Left lung (tissue), 14 donors: ENCODE measurements at regions of chr4 and their contacts with region 1.

Region 1: GRCh38 chr4:74618659-74619058 is 173.7 kb downstream of the AREG start:
- DNase-seq: no peak
- ATAC-seq: peak; percentile 28
- H3K4me3 ChIP-seq: no peak overlapping the region
- H3K27ac ChIP-seq: no peak overlapping the region
- H3K4me1 ChIP-seq: peaks cover 10 to 11% of the 10 kb centered on the region in 2 donors
- H3K27me3 ChIP-seq: no peaks in the 10 kb centered on the region
- CTCF ChIP-seq: no peak

Region 2: DNA sequence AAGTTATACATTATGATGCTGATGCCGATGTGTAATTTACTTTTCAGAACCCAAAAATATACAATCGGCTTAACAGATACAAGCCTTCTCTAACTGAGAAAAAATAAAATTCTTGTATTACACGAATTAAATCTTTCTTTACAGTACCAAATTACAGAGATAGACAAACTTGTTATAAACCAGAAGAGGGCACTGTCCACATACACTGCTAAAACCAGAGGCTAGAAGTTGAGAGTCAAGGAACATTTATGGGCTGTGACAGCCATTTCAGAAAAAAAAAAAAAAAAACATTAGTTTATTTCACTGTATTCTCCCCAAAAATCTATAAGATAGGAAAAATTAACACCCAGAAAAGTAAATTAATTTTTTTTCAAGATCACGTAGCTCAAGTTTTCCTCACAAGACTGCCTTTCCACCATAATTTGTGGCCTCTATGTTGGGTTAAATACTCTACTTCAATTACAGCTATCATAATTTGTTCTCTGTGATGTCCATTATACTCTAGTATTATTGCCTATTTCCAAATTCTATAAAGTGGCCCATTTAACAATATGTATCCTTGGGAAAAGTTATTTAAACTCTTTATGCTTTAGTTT is 241.7 kb before region 1 on chr4:
- intact Hi-C with region 1: loop called in 1 of 2 experiments (anchors 5 kb)
- DNase-seq: peak in 1 of 4 donors; percentile 57
- ATAC-seq: peak; percentile 89
- H3K4me3 ChIP-seq: no peak overlapping the region
- H3K27ac ChIP-seq: no peak overlapping the region
- H3K4me1 ChIP-seq: no peaks in the 10 kb centered on the region
- H3K27me3 ChIP-seq: no peaks in the 10 kb centered on the region
- CTCF ChIP-seq: peak; percentile 52 to 57

Region 3: GRCh38 chr4:74845834-74846233 is 227.2 kb after region 1 on chr4:
- intact Hi-C with region 1: no loop called
- DNase-seq: no peak
- ATAC-seq: no peak
- H3K4me3 ChIP-seq: no peak overlapping the region
- H3K27ac ChIP-seq: no peak overlapping the region
- H3K4me1 ChIP-seq: no peaks in the 10 kb centered on the region
- H3K27me3 ChIP-seq: no peaks in the 10 kb centered on the region
- CTCF ChIP-seq: no peak